ENCODE measurements at regions of chr20 and their contacts with region 1.

Region 1: GRCh38 chr20:45576995-45577394 is 2.1 kb downstream of the WFDC8 start:
- DNase-seq: peak; percentile 1
- ATAC-seq: peak; percentile 35; the same call in 1 of the 2 replicates
- H3K4me3 ChIP-seq: no peak overlapping the region
- H3K27ac ChIP-seq: no peak overlapping the region
- H3K4me1 ChIP-seq: no peaks in the 10 kb centered on the region
- H3K27me3 ChIP-seq: no peaks in the 10 kb centered on the region
- CTCF ChIP-seq: no peak
- POLR2A ChIP-seq: no peak
- RAD21 ChIP-seq: no peak

Region 2: DNA sequence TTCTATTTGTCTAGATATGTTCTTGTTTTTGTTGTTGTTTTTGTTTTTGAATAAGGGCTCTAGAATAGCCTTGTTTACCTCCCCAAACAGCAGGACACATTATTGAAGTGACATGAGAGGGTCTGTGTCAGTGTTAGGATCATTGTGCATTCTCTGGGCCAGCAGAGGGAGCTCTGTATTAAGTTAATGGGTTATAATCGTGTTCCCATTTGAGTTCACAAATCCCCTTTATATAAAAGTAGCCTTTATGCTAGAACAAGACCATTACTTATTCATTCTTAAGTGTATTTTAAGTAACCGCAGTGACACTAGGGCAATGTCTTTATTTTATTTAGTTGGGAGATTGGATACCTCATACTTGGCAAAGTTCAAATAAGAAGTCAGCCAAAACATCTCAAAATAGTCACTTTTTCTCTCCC is 565.9 kb before region 1 on chr20:
- CTCF ChIA-PET with region 1: no interaction called
- POLR2A ChIA-PET with region 1: no interaction called
- dilution Hi-C with region 1: no loop called
- in situ Hi-C with region 1: no loop called
- intact Hi-C with region 1: no loop called
- DNase-seq: peak; percentile 80
- ATAC-seq: peak; percentile 74
- H3K4me3 ChIP-seq: no peak overlapping the region
- H3K27ac ChIP-seq: no peak overlapping the region
- H3K4me1 ChIP-seq: peaks cover 15% of the 10 kb centered on the region
- H3K27me3 ChIP-seq: no peaks in the 10 kb centered on the region
- CTCF ChIP-seq: peak; percentile 75
- POLR2A ChIP-seq: no peak
- RAD21 ChIP-seq: peak; percentile 81

Region 3: DNA sequence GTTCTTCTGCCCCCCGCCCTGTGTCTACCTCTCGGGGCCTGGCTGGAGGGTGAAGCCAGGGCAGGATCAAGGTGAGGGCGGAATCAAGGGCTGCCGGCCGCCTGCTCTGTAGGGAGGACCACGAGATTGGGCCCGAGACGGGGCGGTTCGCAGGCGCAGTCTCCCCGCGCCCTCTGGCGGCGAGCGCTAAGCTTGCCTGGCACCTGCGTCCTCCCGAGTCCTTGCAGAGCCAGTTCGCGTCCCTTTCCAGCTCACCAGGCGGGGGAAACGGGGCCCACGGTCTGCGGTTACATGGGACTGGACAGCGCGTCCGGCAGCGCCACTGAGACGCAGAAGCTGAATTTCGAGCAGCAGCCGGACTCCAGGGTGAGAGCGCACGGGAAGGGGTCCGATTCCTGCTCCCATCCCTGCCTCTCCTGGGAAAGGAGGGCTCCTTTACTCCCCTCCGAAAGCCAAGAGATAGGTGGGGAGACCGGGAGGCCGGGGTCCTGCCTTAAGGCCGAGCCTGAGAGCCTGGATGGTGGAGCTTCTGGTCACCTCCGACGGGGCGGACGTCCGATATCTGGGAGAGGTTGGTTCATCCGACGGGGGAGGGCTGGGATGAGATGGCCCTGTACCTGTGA is 265.3 kb before region 1 on chr20:
- CTCF ChIA-PET with region 1: no interaction called
- POLR2A ChIA-PET with region 1: no interaction called
- dilution Hi-C with region 1: no loop called
- in situ Hi-C with region 1: no loop called
- intact Hi-C with region 1: loop called (anchors 5 kb)
- DNase-seq: peak; percentile 42
- ATAC-seq: peak; percentile 88
- H3K4me3 ChIP-seq: no peak overlapping the region
- H3K27ac ChIP-seq: no peak overlapping the region
- H3K4me1 ChIP-seq: no peaks in the 10 kb centered on the region
- H3K27me3 ChIP-seq: peaks cover 38% of the 10 kb centered on the region
- CTCF ChIP-seq: peak; percentile 67
- POLR2A ChIP-seq: no peak
- RAD21 ChIP-seq: peak; percentile 51